K562 (cell line): ENCODE measurements at regions of chrX and their contacts with region 1.

Region 1: DNA sequence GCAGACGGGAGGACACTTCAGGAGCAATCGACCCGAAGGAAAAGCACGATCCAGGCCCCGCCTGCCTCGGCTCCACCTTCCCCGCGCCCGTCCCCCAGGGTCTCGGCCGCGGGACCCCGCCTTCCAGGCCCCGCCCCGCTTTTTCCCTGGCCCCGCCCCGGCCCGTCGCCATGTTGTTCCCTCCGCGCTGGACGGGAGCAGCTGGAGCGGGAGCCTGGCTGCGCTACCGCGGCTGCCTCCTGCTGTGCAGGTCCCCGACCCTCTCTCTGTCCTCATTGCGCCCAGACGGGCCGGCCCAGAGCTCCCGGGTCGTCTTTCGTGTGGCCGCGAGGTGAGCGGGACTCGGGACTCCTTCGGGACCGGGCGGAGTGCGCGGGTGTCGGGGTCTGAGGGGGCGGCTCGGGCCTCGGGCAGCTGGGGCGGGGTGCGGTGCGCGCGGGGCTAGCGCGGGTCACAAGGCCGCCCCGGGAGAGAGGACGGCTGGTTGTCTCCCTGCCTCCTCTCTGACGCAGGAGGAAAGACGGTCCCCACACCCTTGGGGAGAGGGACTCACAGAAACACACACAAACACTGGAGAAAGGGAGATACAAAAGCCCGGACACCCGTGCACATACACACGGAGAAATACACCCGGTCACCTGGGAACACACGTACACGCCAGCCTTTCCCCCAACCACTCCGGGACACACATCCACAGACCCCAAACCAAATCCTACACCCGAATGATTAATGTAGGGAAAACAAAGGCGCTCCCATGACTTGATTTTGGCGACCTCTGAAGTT is at the start of gene RAB9A:
- DNase-seq: peak; percentile 87 to 92 (median 90)
- ATAC-seq: peak; percentile 94
- H3K4me3 ChIP-seq: peak within 1 kb of the TSS; percentile 95
- H3K27ac ChIP-seq: peak within 1 kb of the TSS; percentile 93
- H3K4me1 ChIP-seq: peaks cover 6 to 24% of the 10 kb centered on the region in 2 experiments; a peak in 2 of 5 replicates
- H3K27me3 ChIP-seq: no peaks in the 10 kb centered on the region
- CTCF ChIP-seq: no peak
- EP300 ChIP-seq: no peak
- POLR2A ChIP-seq: peak; percentile 88
- RAD21 ChIP-seq: no peak
- polyA plus RNA-seq, gene RAB9A: 14.8 to 15.5 TPM

Region 2: GRCh38 chrX:13658602-13659001 is 30.5 kb before region 1 on chrX:
- CTCF ChIA-PET with region 1: no interaction called
- POLR2A ChIA-PET with region 1: no interaction called
- in situ Hi-C with region 1: no loop called
- intact Hi-C with region 1: loop called (anchors 2 kb)
- DNase-seq: peak; percentile 12 to 58 (median 22)
- ATAC-seq: peak; percentile 76
- H3K4me3 ChIP-seq: no peak overlapping the region
- H3K27ac ChIP-seq: no peak overlapping the region
- H3K4me1 ChIP-seq: peaks cover 0 to 3% of the 10 kb centered on the region in 2 experiments; a peak in 2 of 5 replicates
- H3K27me3 ChIP-seq: no peaks in the 10 kb centered on the region
- CTCF ChIP-seq: peak; percentile 52 to 72 (median 55); a peak in 5 of 6 replicates
- EP300 ChIP-seq: no peak
- POLR2A ChIP-seq: no peak
- RAD21 ChIP-seq: peak; percentile 81 to 88

Region 3: GRCh38 chrX:13669246-13669737 is 19.9 kb before region 1 on chrX:
- CTCF ChIA-PET with region 1: no interaction called
- POLR2A ChIA-PET with region 1: interaction called, 8 read pairs
- in situ Hi-C with region 1: no loop called
- intact Hi-C with region 1: loop called (anchors 1 kb)
- DNase-seq: peak; percentile 47 to 78 (median 56)
- ATAC-seq: peak; percentile 93
- H3K4me3 ChIP-seq: peak overlapping the region; percentile 18; the same call in 1 of the 2 replicates
- H3K27ac ChIP-seq: peak overlapping the region; percentile 91
- H3K4me1 ChIP-seq: peaks cover 0 to 3% of the 10 kb centered on the region in 2 experiments; a peak in 3 of 5 replicates
- H3K27me3 ChIP-seq: no peaks in the 10 kb centered on the region
- CTCF ChIP-seq: no peak
- EP300 ChIP-seq: no peak
- POLR2A ChIP-seq: no peak
- RAD21 ChIP-seq: no peak